IMR-90 (cell line): ENCODE measurements at regions of chr13 and their contacts with region 1.

Region 1: DNA sequence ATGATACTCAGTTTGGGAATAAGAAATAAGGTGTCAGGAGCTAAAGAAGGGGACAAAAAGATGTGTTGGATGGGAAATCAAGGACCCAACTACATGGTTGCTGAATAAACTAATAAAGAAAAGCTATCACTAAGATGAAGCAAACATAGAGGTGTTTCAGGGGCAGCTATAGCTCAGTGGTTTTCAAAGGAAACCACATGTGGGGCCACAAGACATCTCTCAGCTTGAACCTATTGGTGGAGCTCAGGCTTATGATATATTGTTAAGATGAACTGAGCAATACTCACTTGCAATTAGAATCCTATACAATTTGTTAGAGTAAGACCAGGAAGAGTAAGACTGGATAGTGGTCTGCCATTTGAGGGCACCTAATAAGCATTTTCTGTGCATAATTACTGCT is 45.1 kb upstream of the SPRY2 start:
- DNase-seq: no peak
- ATAC-seq: no peak
- H3K4me3 ChIP-seq: no peak overlapping the region
- H3K27ac ChIP-seq: no peak overlapping the region
- H3K4me1 ChIP-seq: no peaks in the 10 kb centered on the region
- H3K27me3 ChIP-seq: no peaks in the 10 kb centered on the region; the same call in 1 of the 2 replicates
- CTCF ChIP-seq: no peak
- POLR2A ChIP-seq: no peak
- RAD21 ChIP-seq: no peak

Region 2: DNA sequence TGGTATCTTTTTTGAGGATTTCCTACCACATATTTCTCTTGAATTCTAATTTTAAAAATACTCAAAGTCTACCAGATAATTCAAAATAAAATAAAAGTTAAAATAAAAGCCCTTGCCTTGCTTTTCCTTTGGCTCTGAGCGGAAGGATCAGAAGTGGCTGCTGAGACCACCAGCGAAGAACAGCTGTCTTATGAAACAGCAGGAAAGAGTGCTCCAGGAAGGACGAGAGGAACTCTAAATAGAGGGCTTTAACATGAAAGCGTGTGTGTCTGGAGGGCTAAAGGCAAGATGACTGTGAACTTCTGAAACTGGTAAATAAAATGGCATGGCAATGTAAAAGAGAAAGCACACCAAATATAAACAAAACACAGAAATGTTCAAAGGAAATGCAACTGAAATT is 476.5 kb after region 1 on chr13:
- CTCF ChIA-PET with region 1: no interaction called
- POLR2A ChIA-PET with region 1: no interaction called
- dilution Hi-C with region 1: no loop called
- in situ Hi-C with region 1: no loop called
- intact Hi-C with region 1: loop called (anchors 5 kb)
- DNase-seq: no peak
- ATAC-seq: no peak
- H3K4me3 ChIP-seq: no peak overlapping the region
- H3K27ac ChIP-seq: no peak overlapping the region
- H3K4me1 ChIP-seq: no peaks in the 10 kb centered on the region
- H3K27me3 ChIP-seq: no peaks in the 10 kb centered on the region
- CTCF ChIP-seq: no peak
- POLR2A ChIP-seq: no peak
- RAD21 ChIP-seq: no peak